CD4-positive, alpha-beta T cell (primary cell): ENCODE measurements at regions of chr6 and their contacts with region 1.

Region 1: DNA sequence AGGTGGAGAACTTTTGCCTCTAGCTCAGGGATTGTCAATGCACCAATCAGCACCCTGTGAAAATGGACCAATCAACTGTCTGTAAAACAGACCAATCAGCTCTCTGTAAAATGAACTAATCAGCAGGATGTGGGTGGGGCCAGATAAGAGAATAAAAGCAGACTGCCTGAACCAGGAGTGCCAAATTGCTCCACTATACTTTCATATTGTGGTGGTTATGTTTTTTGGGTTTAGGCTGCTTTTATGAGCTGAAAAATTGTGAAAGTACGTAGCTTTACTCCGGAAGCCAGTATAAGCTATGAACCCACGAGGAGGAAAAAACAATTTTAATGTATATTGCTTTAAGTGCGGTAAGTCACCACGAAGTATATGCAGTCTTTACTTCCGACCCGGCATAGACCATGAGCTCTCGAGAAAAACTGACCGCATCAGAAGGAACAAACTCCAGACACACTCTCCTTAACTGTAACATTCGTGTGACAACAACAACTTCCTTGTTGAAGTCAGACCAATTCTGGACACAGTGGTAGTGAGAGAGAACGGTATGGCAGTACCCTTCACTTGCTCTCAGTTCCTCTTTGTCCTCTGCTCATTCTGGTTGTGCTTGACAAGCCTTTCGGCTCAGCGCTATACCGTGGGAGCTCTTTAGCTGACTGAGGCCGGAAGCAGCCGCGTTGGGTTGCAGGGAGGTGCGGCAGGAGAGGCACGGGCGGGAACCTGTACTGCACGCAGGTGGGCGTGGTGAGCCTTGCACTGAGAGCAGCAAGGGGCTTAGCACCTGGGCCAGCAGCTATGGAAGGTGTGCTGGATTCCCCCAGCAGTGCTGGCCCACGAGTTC is 81.9 kb upstream of the E2F3 start:
- DNase-seq: peak; percentile 50 to 92 (median 76)
- ATAC-seq: peak; percentile 92
- H3K4me3 ChIP-seq: peak overlapping the region; percentile 62
- H3K4me3 Mint-ChIP-seq: peak overlapping the region; percentile 94
- H3K27ac ChIP-seq: peak overlapping the region; percentile 81 to 82
- H3K27ac Mint-ChIP-seq: peak overlapping the region; percentile 98
- H3K4me1 ChIP-seq: peaks cover 14% of the 10 kb centered on the region
- H3K4me1 Mint-ChIP-seq: peaks cover 18% of the 10 kb centered on the region
- H3K27me3 ChIP-seq: no peaks in the 10 kb centered on the region
- H3K27me3 Mint-ChIP-seq: no peaks in the 10 kb centered on the region
- CTCF ChIP-seq: no peak

Region 2: DNA sequence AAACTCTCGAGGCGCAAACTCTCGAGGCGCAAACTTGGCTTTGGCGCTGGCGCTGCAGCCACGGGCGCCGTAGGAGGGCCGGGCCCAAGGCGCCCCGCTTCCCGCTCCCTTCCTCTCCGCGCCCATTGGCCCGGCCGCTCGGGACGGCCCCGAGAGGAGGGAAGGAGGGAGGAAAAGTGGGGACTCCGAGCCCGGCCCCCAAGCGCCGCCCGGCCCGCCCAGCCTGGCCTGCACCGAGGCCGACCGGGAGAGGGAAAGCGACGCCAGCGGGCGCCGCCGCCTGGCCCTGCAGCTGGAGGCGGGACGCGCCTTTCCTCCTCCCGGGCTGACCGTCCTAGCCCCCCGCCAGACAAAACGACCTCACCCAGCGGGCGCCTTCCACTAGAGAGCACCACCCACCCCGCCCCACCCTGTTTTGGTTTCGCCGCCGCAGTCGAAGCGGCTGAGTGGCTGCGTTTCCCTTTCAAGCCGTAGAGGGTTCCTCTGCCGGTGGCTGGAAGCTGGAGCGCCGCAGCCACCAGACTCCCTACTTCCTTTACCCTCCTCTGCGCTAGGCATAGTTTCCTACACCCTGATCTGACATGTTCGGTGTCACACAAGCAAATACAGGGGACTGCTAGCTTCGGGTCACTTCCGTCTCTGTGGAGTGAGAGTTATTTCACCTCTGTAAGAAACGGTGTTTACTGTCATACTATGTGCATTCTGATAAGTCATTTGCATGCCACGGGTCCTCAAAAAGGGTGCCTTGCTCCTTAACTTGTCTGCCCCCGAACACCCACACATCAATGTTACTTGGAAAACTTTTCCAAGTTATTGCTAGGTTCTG is 107.1 kb before region 1 on chr6 and contains the start of gene MBOAT1:
- CTCF ChIA-PET with region 1: no interaction called
- POLR2A ChIA-PET with region 1: interaction called, 15 read pairs
- intact Hi-C with region 1: no loop called
- DNase-seq: peak; percentile 27 to 86 (median 56)
- ATAC-seq: peak; percentile 78
- H3K4me3 ChIP-seq: peak within 1 kb of the TSS; percentile 83
- H3K4me3 Mint-ChIP-seq: peak within 1 kb of the TSS; percentile 99
- H3K27ac ChIP-seq: peak within 1 kb of the TSS; percentile 61 to 78
- H3K27ac Mint-ChIP-seq: peak within 1 kb of the TSS; percentile 97
- H3K4me1 ChIP-seq: peaks cover 28% of the 10 kb centered on the region
- H3K4me1 Mint-ChIP-seq: peaks cover 48% of the 10 kb centered on the region
- H3K27me3 ChIP-seq: no peaks in the 10 kb centered on the region
- H3K27me3 Mint-ChIP-seq: no peaks in the 10 kb centered on the region
- CTCF ChIP-seq: no peak
- total RNA-seq, gene MBOAT1: 17.2 to 18.5 TPM

Region 3: GRCh38 chr6:20334334-20334733 is 14.6 kb after region 1 on chr6:
- CTCF ChIA-PET with region 1: no interaction called
- POLR2A ChIA-PET with region 1: interaction called, 49 read pairs
- intact Hi-C with region 1: no loop called
- DNase-seq: no peak
- ATAC-seq: no peak
- H3K4me3 ChIP-seq: no peak overlapping the region
- H3K4me3 Mint-ChIP-seq: no peak overlapping the region
- H3K27ac ChIP-seq: peak overlapping the region in 1 of 2 donors; percentile 0
- H3K27ac Mint-ChIP-seq: no peak overlapping the region
- H3K4me1 ChIP-seq: peaks cover 5% of the 10 kb centered on the region
- H3K4me1 Mint-ChIP-seq: peaks cover 33% of the 10 kb centered on the region
- H3K27me3 ChIP-seq: no peaks in the 10 kb centered on the region
- H3K27me3 Mint-ChIP-seq: no peaks in the 10 kb centered on the region
- CTCF ChIP-seq: no peak

Region 4: GRCh38 chr6:20377623-20378265 is 58.0 kb after region 1 on chr6:
- CTCF ChIA-PET with region 1: no interaction called
- POLR2A ChIA-PET with region 1: interaction called, 23 read pairs
- intact Hi-C with region 1: no loop called
- DNase-seq: no peak
- ATAC-seq: no peak
- H3K4me3 ChIP-seq: no peak overlapping the region
- H3K4me3 Mint-ChIP-seq: no peak overlapping the region
- H3K27ac ChIP-seq: no peak overlapping the region
- H3K27ac Mint-ChIP-seq: no peak overlapping the region
- H3K4me1 ChIP-seq: peaks cover 4% of the 10 kb centered on the region
- H3K4me1 Mint-ChIP-seq: peaks cover 19% of the 10 kb centered on the region
- H3K27me3 ChIP-seq: no peaks in the 10 kb centered on the region
- H3K27me3 Mint-ChIP-seq: no peaks in the 10 kb centered on the region
- CTCF ChIP-seq: no peak

Region 5: GRCh38 chr6:20401205-20402091 is 81.7 kb after region 1 on chr6 and contains the start of gene E2F3:
- CTCF ChIA-PET with region 1: interaction called, 8 read pairs
- POLR2A ChIA-PET with region 1: interaction called, 179 read pairs
- intact Hi-C with region 1: loop called (anchors 2 kb)
- DNase-seq: peak; percentile 97 to 100 (median 98)
- ATAC-seq: peak; percentile 87
- H3K4me3 ChIP-seq: peak within 1 kb of the TSS; percentile 74
- H3K4me3 Mint-ChIP-seq: peak within 1 kb of the TSS; percentile 92
- H3K27ac ChIP-seq: peak within 1 kb of the TSS; percentile 35 to 85
- H3K27ac Mint-ChIP-seq: peak within 1 kb of the TSS; percentile 80
- H3K4me1 ChIP-seq: peaks cover 23% of the 10 kb centered on the region
- H3K4me1 Mint-ChIP-seq: peaks cover 44% of the 10 kb centered on the region
- H3K27me3 ChIP-seq: no peaks in the 10 kb centered on the region
- H3K27me3 Mint-ChIP-seq: no peaks in the 10 kb centered on the region
- CTCF ChIP-seq: no peak
- total RNA-seq, gene E2F3: 2.7 to 2.9 TPM